ENCODE measurements at regions of chr7 and their contacts with region 1.

Region 1: GRCh38 chr7:19094598-19095352 is 22.7 kb downstream of the TWIST1 start:
- DNase-seq: no peak
- H3K4me3 ChIP-seq: no peak overlapping the region
- H3K27ac ChIP-seq: no peak overlapping the region
- H3K4me1 ChIP-seq: no peaks in the 10 kb centered on the region
- H3K27me3 ChIP-seq: peaks cover 3 to 34% of the 10 kb centered on the region in 2 experiments
- CTCF ChIP-seq: no peak
- POLR2A ChIP-seq: no peak

Region 2: GRCh38 chr7:19080093-19080492 is 14.7 kb before region 1 on chr7:
- CTCF ChIA-PET with region 1: no interaction called
- POLR2A ChIA-PET with region 1: no interaction called
- dilution Hi-C with region 1: no loop called
- intact Hi-C with region 1: loop called (anchors 2 kb)
- DNase-seq: no peak
- H3K4me3 ChIP-seq: no peak overlapping the region
- H3K27ac ChIP-seq: no peak overlapping the region
- H3K4me1 ChIP-seq: no peaks in the 10 kb centered on the region
- H3K27me3 ChIP-seq: peaks cover 0 to 2% of the 10 kb centered on the region in 2 experiments
- CTCF ChIP-seq: no peak
- POLR2A ChIP-seq: no peak